Activated CD4-positive, alpha-beta memory T cell treated with anti-CD3 and anti-CD28 coated beads for 36 hours (primary cell): ENCODE measurements at regions of chr2 and their contacts with region 1.

Region 1: GRCh38 chr2:82000606-82001005 is 1696.1 kb upstream of the LRRTM1 start:
- DNase-seq: no peak
- H3K4me3 Mint-ChIP-seq: no peak overlapping the region
- H3K27ac Mint-ChIP-seq: no peak overlapping the region
- H3K4me1 Mint-ChIP-seq: no peaks in the 10 kb centered on the region
- H3K27me3 Mint-ChIP-seq: no peaks in the 10 kb centered on the region

Region 2: GRCh38 chr2:80874374-80874773 is 1126.2 kb before region 1 on chr2:
- CTCF ChIA-PET with region 1: no interaction called
- POLR2A ChIA-PET with region 1: no interaction called
- intact Hi-C with region 1: no loop called
- DNase-seq: no peak
- H3K4me3 Mint-ChIP-seq: no peak overlapping the region
- H3K27ac Mint-ChIP-seq: no peak overlapping the region
- H3K4me1 Mint-ChIP-seq: no peaks in the 10 kb centered on the region
- H3K27me3 Mint-ChIP-seq: no peaks in the 10 kb centered on the region

Region 3: DNA sequence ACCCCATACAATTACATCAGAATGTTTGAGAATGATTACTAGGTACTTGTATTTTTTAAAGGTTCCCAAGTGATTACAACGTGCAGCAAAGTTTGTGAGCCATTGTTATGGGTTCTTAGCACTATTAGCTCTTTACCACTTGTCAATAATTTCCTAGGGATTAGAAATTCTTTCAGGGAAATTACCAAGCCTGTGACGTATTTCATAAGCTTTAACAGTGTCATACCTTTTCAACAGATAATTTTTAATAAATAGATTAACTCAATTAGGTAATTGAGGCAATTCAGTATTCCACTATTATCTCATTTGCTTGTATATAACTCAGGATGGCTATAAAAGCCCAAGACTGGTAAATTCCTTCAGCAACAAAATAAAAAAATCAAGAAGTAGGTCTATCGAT is 839.6 kb before region 1 on chr2:
- CTCF ChIA-PET with region 1: no interaction called
- POLR2A ChIA-PET with region 1: no interaction called
- intact Hi-C with region 1: loop called (anchors 5 kb)
- DNase-seq: no peak
- H3K4me3 Mint-ChIP-seq: no peak overlapping the region
- H3K27ac Mint-ChIP-seq: no peak overlapping the region
- H3K4me1 Mint-ChIP-seq: no peaks in the 10 kb centered on the region
- H3K27me3 Mint-ChIP-seq: no peaks in the 10 kb centered on the region

Region 4: GRCh38 chr2:82268446-82268845 is 267.8 kb after region 1 on chr2:
- CTCF ChIA-PET with region 1: no interaction called
- POLR2A ChIA-PET with region 1: no interaction called
- intact Hi-C with region 1: no loop called
- DNase-seq: no peak
- H3K4me3 Mint-ChIP-seq: no peak overlapping the region
- H3K27ac Mint-ChIP-seq: no peak overlapping the region
- H3K4me1 Mint-ChIP-seq: no peaks in the 10 kb centered on the region
- H3K27me3 Mint-ChIP-seq: no peaks in the 10 kb centered on the region